ENCODE measurements at regions of chr17 and their contacts with region 1.

Region 1: DNA sequence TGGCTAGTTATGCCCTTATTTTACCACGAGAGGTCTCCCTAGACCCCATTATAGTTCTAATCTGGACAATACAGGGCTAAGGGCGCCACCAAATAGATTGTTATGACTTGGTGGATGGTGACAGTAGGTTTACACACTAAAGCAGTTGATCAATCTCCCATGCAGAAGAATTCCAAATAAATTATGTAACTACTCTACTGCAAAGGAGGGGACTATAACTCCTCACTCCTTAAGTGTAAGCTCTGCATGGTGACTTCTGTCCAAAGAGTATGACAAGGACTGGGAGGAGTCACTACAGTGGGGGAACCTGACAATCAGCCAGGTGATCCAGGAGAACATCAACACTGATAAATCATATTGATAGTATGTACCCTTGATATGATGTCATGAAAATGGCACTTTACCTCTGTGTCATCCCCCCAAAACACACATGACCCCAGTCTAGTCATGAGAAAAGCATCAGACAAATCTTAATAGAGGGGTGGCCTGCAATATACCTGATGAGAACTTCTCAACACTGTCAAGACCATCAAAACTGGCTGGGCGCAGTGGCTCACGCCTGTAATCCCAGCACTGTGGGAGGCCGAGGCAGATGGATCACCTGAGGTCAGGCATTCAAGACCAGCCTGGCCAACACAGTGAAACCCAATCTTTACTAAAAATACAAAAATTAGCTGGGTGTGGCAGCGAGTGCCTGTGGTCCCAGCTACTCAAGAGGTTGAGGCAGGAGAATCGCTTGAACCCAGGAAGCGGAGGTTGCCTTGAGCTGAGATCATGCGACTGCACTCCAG is 20.1 kb upstream of the YPEL2 start:
- DNase-seq: peak in 2 of 10 donors; percentile 50 to 54
- H3K4me3 ChIP-seq: peak overlapping the region in 3 of 59 donors; percentile 5 to 11 (median 7)
- H3K27ac ChIP-seq: peak overlapping the region in 1 of 59 donors; percentile 19
- H3K27me3 ChIP-seq: no peaks in the 10 kb centered on the region
- CTCF ChIP-seq: peak in 55 of 56 donors; percentile 72 to 99 (median 90)

Region 2: DNA sequence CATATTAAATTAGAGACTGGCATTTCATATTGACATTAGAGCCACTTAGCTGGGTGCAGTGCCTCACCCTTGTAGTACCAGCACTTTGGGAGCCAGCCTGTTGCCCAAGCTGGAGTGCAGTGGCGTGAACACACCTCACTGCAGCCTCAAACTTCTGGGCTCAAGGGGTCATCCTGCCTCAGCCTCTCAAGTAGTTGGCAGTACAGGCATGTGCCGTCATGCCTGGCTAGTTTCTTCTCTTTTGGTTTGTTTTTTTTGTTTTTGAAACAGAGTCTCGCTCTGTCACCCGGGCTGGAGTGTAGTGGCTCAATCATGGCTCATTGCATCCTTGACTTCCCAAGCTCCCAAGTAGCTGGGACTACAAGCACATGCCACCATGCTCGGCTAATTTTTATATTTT is 547.0 kb before region 1 on chr17:
- intact Hi-C with region 1: no loop called
- DNase-seq: no peak
- H3K4me3 ChIP-seq: no peak overlapping the region
- H3K27ac ChIP-seq: no peak overlapping the region
- H3K27me3 ChIP-seq: no peaks in the 10 kb centered on the region
- CTCF ChIP-seq: no peak

Region 3: GRCh38 chr17:59257101-59257500 is 54.2 kb before region 1 on chr17:
- intact Hi-C with region 1: no loop called
- DNase-seq: no peak
- H3K4me3 ChIP-seq: no peak overlapping the region
- H3K27ac ChIP-seq: no peak overlapping the region
- H3K27me3 ChIP-seq: no peaks in the 10 kb centered on the region
- CTCF ChIP-seq: no peak

Region 4: DNA sequence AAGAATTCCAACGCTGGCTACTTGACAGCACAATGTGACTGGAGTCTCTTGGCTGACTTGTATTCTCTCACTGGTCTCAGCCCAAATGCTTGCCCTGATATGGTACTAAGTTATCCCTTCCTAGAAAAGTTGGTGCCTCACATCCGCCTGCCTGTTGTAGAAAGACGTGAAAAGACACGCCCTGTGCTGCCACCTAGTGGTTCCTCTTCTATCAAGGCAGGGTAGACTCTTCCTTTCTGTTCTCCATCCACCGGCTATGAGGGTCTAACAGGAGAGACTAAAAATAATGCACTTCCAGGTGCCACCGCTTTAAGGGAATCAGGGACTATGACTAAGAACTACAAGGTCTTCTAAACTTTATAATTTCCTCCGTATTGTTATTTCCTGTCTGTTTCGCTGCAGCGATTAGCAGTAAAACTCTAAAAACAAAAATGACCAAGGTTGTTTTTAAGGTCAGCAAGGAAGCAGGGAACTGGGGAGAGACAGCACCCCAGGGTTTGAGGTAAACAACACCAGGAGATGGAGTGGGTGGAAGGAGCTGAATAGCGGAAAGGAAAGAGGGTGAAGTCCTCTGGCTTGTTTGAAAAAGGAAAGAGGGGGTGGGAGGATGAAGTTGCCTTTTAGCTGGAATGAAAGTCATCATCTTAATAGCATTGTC is 129.6 kb after region 1 on chr17:
- intact Hi-C with region 1: loop called in 1 of 2 experiments (anchors 1 kb)
- DNase-seq: peak; percentile 70 to 96 (median 90)
- H3K4me3 ChIP-seq: peak overlapping the region in 35 of 59 donors; percentile 1 to 51 (median 15)
- H3K27ac ChIP-seq: peak overlapping the region in 57 of 59 donors; percentile 9 to 90 (median 73)
- H3K27me3 ChIP-seq: no peaks in the 10 kb centered on the region
- CTCF ChIP-seq: peak; percentile 74 to 98 (median 93)

Region 5: GRCh38 chr17:59558977-59559376 is 247.7 kb after region 1 on chr17:
- intact Hi-C with region 1: loop called in 1 of 2 experiments (anchors 10 kb)
- DNase-seq: no peak
- H3K4me3 ChIP-seq: no peak overlapping the region
- H3K27ac ChIP-seq: no peak overlapping the region
- H3K27me3 ChIP-seq: no peaks in the 10 kb centered on the region
- CTCF ChIP-seq: peak in 51 of 56 donors; percentile 19 to 60 (median 45)